AG04449 (cell line): ENCODE measurements at regions of chr11 and their contacts with region 1.

Region 1: GRCh38 chr11:133064152-133064877 is 468.0 kb downstream of the OPCML start:
- DNase-seq: peak; percentile 23
- H3K4me3 ChIP-seq: peak overlapping the region; percentile 71
- CTCF ChIP-seq: peak; percentile 96

Region 2: DNA sequence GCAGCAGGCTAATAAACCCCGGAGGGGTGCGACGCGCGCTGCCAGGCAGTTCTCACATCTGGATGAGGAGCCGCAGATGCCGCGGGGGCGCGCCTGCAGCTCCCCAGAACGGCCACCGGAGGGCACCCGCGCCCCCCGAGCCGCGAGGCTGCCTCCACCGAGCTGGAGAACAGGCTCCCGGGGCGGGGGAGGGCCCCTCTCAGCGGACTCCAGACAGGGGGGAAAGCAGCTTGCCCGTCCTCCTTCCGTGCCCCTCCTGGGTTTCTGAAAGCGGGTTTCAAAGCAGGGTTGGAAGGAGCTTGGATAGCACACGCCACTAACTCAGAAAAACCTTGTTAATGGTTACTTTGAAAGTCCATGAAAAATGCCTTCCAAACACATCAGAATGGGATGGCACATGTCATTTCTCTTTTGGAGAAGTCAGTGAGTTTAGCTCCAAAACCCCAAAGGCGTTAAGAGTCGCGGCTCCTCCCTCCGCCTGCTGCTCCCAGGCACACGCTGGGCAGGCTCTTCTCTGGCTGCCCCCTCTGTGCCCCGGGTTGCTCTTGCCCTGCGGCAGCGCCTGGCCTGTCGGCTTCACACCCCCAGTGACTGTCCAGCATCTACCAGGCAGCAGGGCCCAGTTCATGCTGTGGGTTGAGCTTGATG is 1376.1 kb before region 1 on chr11:
- CTCF ChIA-PET with region 1: interaction called, 36 read pairs
- POLR2A ChIA-PET with region 1: no interaction called
- DNase-seq: no peak
- H3K4me3 ChIP-seq: peak overlapping the region; percentile 43
- CTCF ChIP-seq: peak; percentile 96

Region 3: DNA sequence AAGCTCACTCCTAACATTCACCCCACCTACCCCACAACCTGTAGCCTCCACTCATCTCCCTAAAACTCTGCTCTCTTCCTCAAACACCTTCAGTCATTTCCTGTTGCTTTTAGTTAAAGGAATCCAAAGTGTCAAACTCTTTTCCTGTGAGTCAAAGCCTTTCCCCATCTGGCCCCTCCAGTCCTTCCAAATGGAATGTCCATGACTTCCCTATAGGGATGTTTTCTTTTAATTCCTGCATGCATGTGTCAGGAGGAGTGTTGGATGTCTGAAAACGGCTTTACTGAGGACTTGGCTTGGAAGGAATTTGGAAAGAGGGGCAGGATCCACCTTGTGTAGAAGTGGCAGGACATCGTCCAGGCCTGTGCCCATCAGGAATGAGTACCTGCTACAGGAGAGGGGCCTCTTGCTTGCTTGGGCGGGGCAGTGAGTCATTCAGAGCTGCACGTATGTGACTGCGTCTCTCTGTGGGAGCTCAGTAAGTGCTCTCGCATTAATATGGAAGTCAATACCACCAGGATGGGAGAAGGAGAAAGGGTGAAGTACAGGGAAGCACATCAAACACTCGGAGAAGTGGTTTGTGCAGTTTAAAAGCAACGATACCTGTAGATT is 23.9 kb before region 1 on chr11:
- CTCF ChIA-PET with region 1: interaction called, 15 read pairs
- POLR2A ChIA-PET with region 1: no interaction called
- DNase-seq: peak; percentile 41
- H3K4me3 ChIP-seq: no peak overlapping the region
- CTCF ChIP-seq: no peak

Region 4: GRCh38 chr11:133228471-133229329 is 164.4 kb after region 1 on chr11:
- CTCF ChIA-PET with region 1: no interaction called
- POLR2A ChIA-PET with region 1: no interaction called
- DNase-seq: no peak
- H3K4me3 ChIP-seq: no peak overlapping the region
- CTCF ChIP-seq: no peak